ENCODE measurements at regions of chr4 and their contacts with region 1.

Region 1: DNA sequence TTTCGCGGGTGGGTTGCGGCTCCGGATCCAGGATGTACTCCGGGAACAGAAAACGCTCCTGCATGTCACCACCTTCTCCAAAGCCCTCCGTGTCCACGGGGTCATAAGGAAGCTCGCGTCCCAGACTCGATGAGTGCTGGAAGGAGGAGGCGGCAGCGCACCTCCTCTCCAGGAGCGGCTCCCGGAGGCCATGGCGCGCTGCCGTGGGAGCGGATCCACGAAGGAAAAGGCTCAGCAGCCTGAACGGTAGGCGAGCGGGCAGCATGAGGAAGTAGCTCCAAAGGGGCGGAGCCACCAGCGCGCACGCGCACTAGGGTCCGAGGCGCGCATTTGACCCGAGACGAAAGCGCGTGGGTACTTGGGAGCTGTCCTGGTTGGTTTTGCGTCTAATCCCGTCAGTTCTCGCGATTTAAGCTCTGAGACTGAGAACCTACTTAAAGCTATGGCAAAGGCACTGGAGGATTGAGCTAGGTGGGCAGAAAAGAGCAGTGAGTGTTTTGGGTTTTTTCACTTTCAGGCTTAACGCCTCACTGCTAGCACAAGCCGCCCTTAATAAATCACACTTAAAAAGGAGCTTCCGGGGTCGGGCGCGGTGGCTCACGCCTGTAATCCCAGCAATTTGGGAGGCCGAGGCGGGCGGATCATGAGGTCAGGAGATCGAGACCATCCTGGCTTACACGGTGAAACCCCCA is at the start of gene NOA1:
- DNase-seq: peak; percentile 97 to 99 (median 98)
- ATAC-seq: peak; percentile 88 to 92 (median 90)
- H3K4me3 ChIP-seq: peak within 1 kb of the TSS; percentile 74 to 97 (median 93)
- H3K27ac ChIP-seq: peak within 1 kb of the TSS; percentile 69 to 97 (median 86)
- H3K4me1 ChIP-seq: peaks cover 5 to 63% (median 50%) of the 10 kb centered on the region in 12 donors
- H3K27me3 ChIP-seq: no peaks in the 10 kb centered on the region
- CTCF ChIP-seq: no peak
- POLR2A ChIP-seq: peak in 1 of 2 donors; percentile 82
- total RNA-seq, gene NOA1: 11.2 to 23.0 (median 12.2) TPM

Region 2: GRCh38 chr4:56907489-56908205 is 69.8 kb before region 1 on chr4 and contains the start of gene REST:
- intact Hi-C with region 1: loop called in 9 of 10 experiments (anchors 2 to 10 kb)
- DNase-seq: peak; percentile 79 to 91 (median 85)
- ATAC-seq: peak; percentile 68 to 87 (median 84)
- H3K4me3 ChIP-seq: peak within 1 kb of the TSS; percentile 80 to 99 (median 97)
- H3K27ac ChIP-seq: peak within 1 kb of the TSS; percentile 73 to 97 (median 94)
- H3K4me1 ChIP-seq: peaks cover 5 to 45% (median 30%) of the 10 kb centered on the region in 12 donors
- H3K27me3 ChIP-seq: no peaks in the 10 kb centered on the region
- CTCF ChIP-seq: peak in 1 of 12 donors; percentile 6
- POLR2A ChIP-seq: peak in 1 of 2 donors; percentile 64
- total RNA-seq, gene REST: 20.5 to 41.6 (median 29.6) TPM

Region 3: DNA sequence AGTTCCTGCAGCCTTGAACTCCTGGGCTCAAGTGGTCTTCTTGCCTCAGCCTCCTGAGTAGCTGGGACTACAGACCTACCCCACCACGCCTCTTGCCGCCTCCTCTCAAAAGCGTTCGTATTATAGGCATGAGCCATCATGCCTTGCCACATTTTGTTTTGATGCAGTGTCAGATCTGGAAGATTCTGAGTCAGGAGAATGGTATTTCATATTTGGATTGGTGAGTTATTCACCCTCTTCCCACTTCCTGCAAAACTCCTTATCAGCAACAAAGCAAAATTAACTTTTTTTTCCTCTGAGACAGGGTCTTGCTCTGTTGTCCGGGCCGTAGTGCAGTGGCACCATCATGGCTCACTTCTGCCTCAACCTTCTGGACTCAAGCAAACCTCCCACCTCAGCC is 40.2 kb before region 1 on chr4:
- intact Hi-C with region 1: no loop called
- DNase-seq: no peak
- ATAC-seq: no peak
- H3K4me3 ChIP-seq: no peak overlapping the region
- H3K27ac ChIP-seq: no peak overlapping the region
- H3K4me1 ChIP-seq: peaks cover 0 to 3% (median 0%) of the 10 kb centered on the region in 12 donors
- H3K27me3 ChIP-seq: no peaks in the 10 kb centered on the region
- CTCF ChIP-seq: no peak
- POLR2A ChIP-seq: no peak

Region 4: DNA sequence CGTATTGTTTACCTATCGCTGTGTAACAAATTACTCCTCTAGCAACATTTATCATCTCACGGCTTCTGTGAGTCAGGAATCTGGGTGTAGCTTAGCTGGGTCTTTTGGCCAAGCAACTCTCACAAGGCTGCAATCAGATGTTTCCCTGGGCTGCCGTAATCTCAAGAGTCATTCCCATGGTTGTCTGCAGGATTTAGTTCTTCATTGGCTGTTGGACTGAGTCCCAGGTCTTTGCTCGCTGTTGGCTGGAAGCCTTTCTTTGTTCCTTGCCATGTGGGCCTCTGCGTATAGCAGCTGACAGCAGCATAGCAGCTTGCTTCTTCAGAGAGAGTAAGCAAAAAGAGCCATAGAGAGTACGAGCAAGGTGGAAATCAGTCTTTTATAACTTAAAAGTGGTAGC is 18.1 kb after region 1 on chr4:
- intact Hi-C with region 1: loop called in 1 of 10 experiments (anchors 2 kb)
- DNase-seq: peak in 4 of 5 donors; percentile 79 to 83 (median 82)
- ATAC-seq: peak; percentile 90 to 97 (median 96)
- H3K4me3 ChIP-seq: peak overlapping the region in 1 of 12 donors; percentile 8
- H3K27ac ChIP-seq: peak overlapping the region in 11 of 12 donors; percentile 9 to 70 (median 55)
- H3K4me1 ChIP-seq: peaks cover 4 to 20% (median 12%) of the 10 kb centered on the region in 12 donors
- H3K27me3 ChIP-seq: no peaks in the 10 kb centered on the region
- CTCF ChIP-seq: no peak
- POLR2A ChIP-seq: no peak